Activated CD4-positive, alpha-beta T cell treated with anti-CD3 and anti-CD28 coated beads for 36 hours (primary cell): ENCODE measurements at regions of chr2 and their contacts with region 1.

Region 1: GRCh38 chr2:152415231-152415642 is 80.3 kb downstream of the FMNL2 start:
- DNase-seq: peak; percentile 70
- ATAC-seq: peak; percentile 97
- H3K4me3 Mint-ChIP-seq: no peak overlapping the region
- H3K27ac Mint-ChIP-seq: peak overlapping the region; percentile 52
- H3K4me1 Mint-ChIP-seq: peaks cover 31% of the 10 kb centered on the region
- H3K27me3 Mint-ChIP-seq: peaks cover 29% of the 10 kb centered on the region

Region 2: GRCh38 chr2:152335010-152335725 is 80.1 kb before region 1 on chr2 and contains the start of gene FMNL2:
- CTCF ChIA-PET with region 1: no interaction called
- POLR2A ChIA-PET with region 1: no interaction called
- intact Hi-C with region 1: loop called in 1 of 2 experiments (anchors 2 kb)
- DNase-seq: peak; percentile 80
- ATAC-seq: peak; percentile 83
- H3K4me3 Mint-ChIP-seq: peak within 1 kb of the TSS; percentile 73
- H3K27ac Mint-ChIP-seq: no peak within 1 kb of the TSS
- H3K4me1 Mint-ChIP-seq: peaks cover 11% of the 10 kb centered on the region
- H3K27me3 Mint-ChIP-seq: peaks cover 44% of the 10 kb centered on the region
- total RNA-seq, gene FMNL2: 3.0 to 3.3 TPM

Region 3: GRCh38 chr2:152694161-152694661 is 279.0 kb after region 1 on chr2:
- CTCF ChIA-PET with region 1: no interaction called
- POLR2A ChIA-PET with region 1: no interaction called
- intact Hi-C with region 1: loop called in 1 of 2 experiments (anchors 1 kb)
- DNase-seq: peak; percentile 70
- ATAC-seq: peak; percentile 92
- H3K4me3 Mint-ChIP-seq: peak overlapping the region; percentile 66
- H3K27ac Mint-ChIP-seq: peak overlapping the region; percentile 68
- H3K4me1 Mint-ChIP-seq: peaks cover 37% of the 10 kb centered on the region
- H3K27me3 Mint-ChIP-seq: no peaks in the 10 kb centered on the region